ENCODE measurements at regions of chr12 and their contacts with region 1.

Region 1: DNA sequence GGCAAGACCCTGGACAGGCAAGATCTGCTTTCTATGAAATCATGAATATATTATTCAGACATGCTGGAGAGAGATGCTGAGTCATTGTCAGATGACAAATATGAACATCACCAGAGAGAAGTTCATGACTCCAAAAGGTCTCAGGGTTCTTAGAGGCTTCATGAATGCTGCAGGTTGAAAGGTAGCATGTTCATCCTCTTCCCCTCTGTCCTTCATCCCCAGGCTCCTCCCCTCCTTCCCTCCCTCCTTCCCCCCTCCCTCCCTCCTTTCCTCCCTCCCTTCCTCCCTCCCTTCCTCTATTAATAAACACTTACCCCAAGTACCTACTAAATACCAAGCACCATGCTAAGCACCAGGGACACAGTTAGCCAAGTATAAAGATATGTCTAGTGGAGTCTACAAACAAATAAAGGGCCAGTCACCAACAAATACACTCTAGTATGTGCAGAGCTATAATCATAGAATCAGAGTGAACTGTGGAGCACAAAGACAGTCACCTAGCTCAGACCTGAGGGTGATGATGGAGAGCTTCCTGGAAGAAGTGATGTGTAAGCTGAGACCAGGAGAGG is 46.2 kb downstream of the RPH3A start:
- DNase-seq: no peak
- ATAC-seq: peak; percentile 38
- H3K4me3 ChIP-seq: no peak overlapping the region
- H3K27ac ChIP-seq: no peak overlapping the region
- H3K4me1 ChIP-seq: peaks cover 0 to 24% of the 10 kb centered on the region in 2 experiments; a peak in 2 of 4 replicates
- H3K27me3 ChIP-seq: peaks cover 10% of the 10 kb centered on the region; the same call in 1 of the 2 replicates
- CTCF ChIP-seq: no peak
- POLR2A ChIP-seq: no peak
- RAD21 ChIP-seq: no peak

Region 2: DNA sequence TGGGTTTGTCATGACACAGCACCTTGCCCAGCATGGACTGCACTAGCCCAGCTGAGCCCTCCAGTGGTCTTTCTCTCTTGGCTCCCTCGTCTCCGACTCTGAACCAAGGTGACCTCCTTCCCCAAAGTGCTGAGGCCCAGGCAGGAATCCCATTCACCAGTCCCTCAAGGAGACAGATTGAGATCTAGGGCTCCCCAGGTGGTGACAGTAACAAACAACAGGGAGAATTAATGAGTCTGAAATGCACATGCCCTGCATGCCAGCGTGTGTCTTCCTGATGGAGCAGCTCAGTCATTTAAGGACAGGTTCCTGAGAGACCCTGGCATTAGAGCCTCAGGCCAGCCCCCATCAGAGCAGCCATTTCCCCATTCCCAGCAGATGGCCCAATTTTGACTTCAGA is 17.7 kb after region 1 on chr12:
- CTCF ChIA-PET with region 1: no interaction called
- POLR2A ChIA-PET with region 1: no interaction called
- RAD21 ChIA-PET with region 1: no interaction called
- intact Hi-C with region 1: loop called (anchors 1 kb)
- DNase-seq: peak; percentile 12
- ATAC-seq: peak; percentile 92
- H3K4me3 ChIP-seq: no peak overlapping the region
- H3K27ac ChIP-seq: no peak overlapping the region
- H3K4me1 ChIP-seq: no peaks in the 10 kb centered on the region
- H3K27me3 ChIP-seq: peaks cover 82% of the 10 kb centered on the region
- CTCF ChIP-seq: peak in 2 of 3 experiments; percentile 54; a peak in 4 of 6 replicates
- POLR2A ChIP-seq: no peak
- RAD21 ChIP-seq: peak; percentile 36; the same call in 1 of the 2 replicates

Region 3: DNA sequence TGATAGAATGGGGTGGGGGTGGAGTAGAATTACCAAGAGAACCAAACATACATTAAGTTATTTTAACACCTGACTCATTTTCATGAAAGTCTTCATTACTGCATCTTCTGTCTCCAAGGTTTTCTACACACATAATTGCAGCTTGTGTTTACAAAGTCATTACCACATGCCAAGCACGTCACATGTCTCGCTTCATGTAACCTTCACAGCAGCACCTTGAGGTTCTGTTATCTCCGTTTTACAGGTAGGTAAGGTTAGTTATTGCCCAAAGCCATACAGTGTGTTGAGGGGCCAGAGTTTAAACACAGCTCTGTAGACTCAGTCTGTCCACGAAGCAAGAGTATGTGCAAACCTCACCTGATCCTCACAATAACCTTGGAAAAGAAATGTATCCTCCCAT is 1192.7 kb after region 1 on chr12:
- CTCF ChIA-PET with region 1: no interaction called
- POLR2A ChIA-PET with region 1: no interaction called
- RAD21 ChIA-PET with region 1: no interaction called
- intact Hi-C with region 1: no loop called
- DNase-seq: no peak
- ATAC-seq: no peak
- H3K4me3 ChIP-seq: no peak overlapping the region
- H3K27ac ChIP-seq: no peak overlapping the region
- H3K4me1 ChIP-seq: no peaks in the 10 kb centered on the region
- H3K27me3 ChIP-seq: peaks cover 49% of the 10 kb centered on the region
- CTCF ChIP-seq: no peak
- POLR2A ChIP-seq: no peak
- RAD21 ChIP-seq: no peak